GM12878 (cell line): ENCODE measurements at regions of chr11 and their contacts with region 1.

Region 1: GRCh38 chr11:16785520-16786128 is 47.2 kb downstream of the C11orf58 start:
- DNase-seq: peak; percentile 17
- ATAC-seq: peak; percentile 88
- H3K4me3 ChIP-seq: no peak overlapping the region
- H3K27ac ChIP-seq: no peak overlapping the region
- H3K4me1 ChIP-seq: no peaks in the 10 kb centered on the region
- H3K27me3 ChIP-seq: no peaks in the 10 kb centered on the region; a peak in 1 of 4 replicates
- CTCF ChIP-seq: peak; percentile 86 to 90 (median 88)
- EP300 ChIP-seq: no peak
- POLR2A ChIP-seq: no peak
- RAD21 ChIP-seq: peak; percentile 80

Region 2: GRCh38 chr11:16773981-16774935 is 11.4 kb before region 1 on chr11:
- CTCF ChIA-PET with region 1: interaction called, 59 read pairs
- POLR2A ChIA-PET with region 1: no interaction called
- RAD21 ChIA-PET with region 1: interaction called, 7 read pairs
- SMC1A ChIA-PET with region 1: interaction called, 9 read pairs
- in situ Hi-C with region 1: no loop called
- intact Hi-C with region 1: no loop called
- DNase-seq: no peak
- ATAC-seq: no peak
- H3K4me3 ChIP-seq: no peak overlapping the region
- H3K27ac ChIP-seq: no peak overlapping the region
- H3K4me1 ChIP-seq: no peaks in the 10 kb centered on the region
- H3K27me3 ChIP-seq: no peaks in the 10 kb centered on the region
- CTCF ChIP-seq: no peak
- EP300 ChIP-seq: no peak
- POLR2A ChIP-seq: no peak
- RAD21 ChIP-seq: no peak

Region 3: GRCh38 chr11:16809886-16810668 is 24.5 kb after region 1 on chr11:
- CTCF ChIA-PET with region 1: interaction called, 23 read pairs
- POLR2A ChIA-PET with region 1: no interaction called
- RAD21 ChIA-PET with region 1: interaction called, 3 read pairs
- SMC1A ChIA-PET with region 1: interaction called, 5 read pairs
- in situ Hi-C with region 1: no loop called
- intact Hi-C with region 1: no loop called
- DNase-seq: no peak
- ATAC-seq: no peak
- H3K4me3 ChIP-seq: no peak overlapping the region
- H3K27ac ChIP-seq: no peak overlapping the region
- H3K4me1 ChIP-seq: no peaks in the 10 kb centered on the region
- H3K27me3 ChIP-seq: peaks cover 0 to 2% of the 10 kb centered on the region in 2 experiments; a peak in 1 of 4 replicates
- CTCF ChIP-seq: no peak
- EP300 ChIP-seq: no peak
- POLR2A ChIP-seq: no peak
- RAD21 ChIP-seq: no peak

Region 4: GRCh38 chr11:16917941-16918340 is 132.3 kb after region 1 on chr11:
- CTCF ChIA-PET with region 1: interaction called, 18 read pairs
- POLR2A ChIA-PET with region 1: no interaction called
- RAD21 ChIA-PET with region 1: interaction called, 3 read pairs
- SMC1A ChIA-PET with region 1: no interaction called
- in situ Hi-C with region 1: no loop called
- intact Hi-C with region 1: loop called (anchors 10 kb)
- DNase-seq: no peak
- ATAC-seq: no peak
- H3K4me3 ChIP-seq: no peak overlapping the region
- H3K27ac ChIP-seq: no peak overlapping the region
- H3K4me1 ChIP-seq: no peaks in the 10 kb centered on the region
- H3K27me3 ChIP-seq: no peaks in the 10 kb centered on the region
- CTCF ChIP-seq: no peak
- EP300 ChIP-seq: no peak
- POLR2A ChIP-seq: no peak
- RAD21 ChIP-seq: no peak

Region 5: DNA sequence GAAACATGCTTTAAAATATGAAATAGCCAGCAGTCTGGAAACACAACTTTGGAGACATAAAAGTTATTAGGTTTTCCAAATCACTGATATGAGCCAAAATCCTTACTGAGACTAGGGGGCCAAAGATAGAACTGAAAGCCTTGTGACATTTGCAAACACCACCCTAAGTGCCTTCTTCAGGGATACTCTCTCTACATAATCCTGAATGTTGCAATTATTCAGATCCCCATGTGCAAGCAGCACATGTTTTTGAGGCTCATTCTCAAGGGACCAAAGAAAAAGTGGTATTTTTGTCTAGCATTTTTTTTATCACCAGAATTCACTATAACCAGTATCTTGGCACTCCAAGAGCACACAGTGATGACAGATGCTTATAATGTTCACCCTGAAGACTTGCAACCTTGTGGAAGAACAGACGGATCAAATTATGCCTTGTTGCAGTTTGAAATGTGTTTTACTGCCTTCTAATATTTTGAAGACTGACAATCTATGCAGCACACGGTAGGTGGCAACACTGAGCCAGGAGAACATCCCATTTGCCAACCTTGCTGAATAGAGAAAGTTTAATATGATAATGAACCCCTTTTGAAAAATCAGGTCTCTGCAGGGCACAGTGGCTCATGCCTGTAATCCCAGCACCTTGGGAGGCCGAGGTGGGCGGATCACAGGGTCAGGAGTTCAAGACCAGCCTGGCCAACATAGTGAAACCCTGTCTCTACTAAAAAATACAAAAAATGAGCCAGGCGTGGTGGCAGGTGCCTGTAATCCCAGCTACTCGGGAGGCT is 150.1 kb after region 1 on chr11:
- CTCF ChIA-PET with region 1: interaction called, 26 read pairs
- POLR2A ChIA-PET with region 1: no interaction called
- RAD21 ChIA-PET with region 1: interaction called, 4 read pairs
- SMC1A ChIA-PET with region 1: interaction called, 4 read pairs
- in situ Hi-C with region 1: no loop called
- intact Hi-C with region 1: no loop called
- DNase-seq: no peak
- ATAC-seq: peak; percentile 88
- H3K4me3 ChIP-seq: no peak overlapping the region
- H3K27ac ChIP-seq: no peak overlapping the region
- H3K4me1 ChIP-seq: no peaks in the 10 kb centered on the region
- H3K27me3 ChIP-seq: no peaks in the 10 kb centered on the region; a peak in 1 of 4 replicates
- CTCF ChIP-seq: peak; percentile 64 to 85 (median 78)
- EP300 ChIP-seq: no peak
- POLR2A ChIP-seq: no peak
- RAD21 ChIP-seq: peak; percentile 86

Region 6: GRCh38 chr11:17063171-17064002 is 277.8 kb after region 1 on chr11:
- CTCF ChIA-PET with region 1: interaction called, 45 read pairs
- POLR2A ChIA-PET with region 1: no interaction called
- RAD21 ChIA-PET with region 1: interaction called, 32 read pairs
- SMC1A ChIA-PET with region 1: interaction called, 17 read pairs
- in situ Hi-C with region 1: no loop called
- intact Hi-C with region 1: loop called (anchors 1 kb)
- DNase-seq: peak; percentile 17
- ATAC-seq: peak; percentile 100
- H3K4me3 ChIP-seq: no peak overlapping the region
- H3K27ac ChIP-seq: no peak overlapping the region
- H3K4me1 ChIP-seq: no peaks in the 10 kb centered on the region
- H3K27me3 ChIP-seq: no peaks in the 10 kb centered on the region
- CTCF ChIP-seq: peak; percentile 73 to 91 (median 83)
- EP300 ChIP-seq: no peak
- POLR2A ChIP-seq: no peak
- RAD21 ChIP-seq: peak; percentile 95